WTC11 (cell line): ENCODE measurements at regions of chr9 and their contacts with region 1.

Region 1: GRCh38 chr9:15529566-15530324 is 19.0 kb upstream of the PSIP1 start:
- DNase-seq: no peak
- ATAC-seq: no peak
- H3K4me3 Mint-ChIP-seq: no peak overlapping the region
- H3K27ac Mint-ChIP-seq: no peak overlapping the region
- H3K4me1 Mint-ChIP-seq: no peaks in the 10 kb centered on the region
- H3K27me3 Mint-ChIP-seq: no peaks in the 10 kb centered on the region
- CTCF ChIP-seq: no peak

Region 2: DNA sequence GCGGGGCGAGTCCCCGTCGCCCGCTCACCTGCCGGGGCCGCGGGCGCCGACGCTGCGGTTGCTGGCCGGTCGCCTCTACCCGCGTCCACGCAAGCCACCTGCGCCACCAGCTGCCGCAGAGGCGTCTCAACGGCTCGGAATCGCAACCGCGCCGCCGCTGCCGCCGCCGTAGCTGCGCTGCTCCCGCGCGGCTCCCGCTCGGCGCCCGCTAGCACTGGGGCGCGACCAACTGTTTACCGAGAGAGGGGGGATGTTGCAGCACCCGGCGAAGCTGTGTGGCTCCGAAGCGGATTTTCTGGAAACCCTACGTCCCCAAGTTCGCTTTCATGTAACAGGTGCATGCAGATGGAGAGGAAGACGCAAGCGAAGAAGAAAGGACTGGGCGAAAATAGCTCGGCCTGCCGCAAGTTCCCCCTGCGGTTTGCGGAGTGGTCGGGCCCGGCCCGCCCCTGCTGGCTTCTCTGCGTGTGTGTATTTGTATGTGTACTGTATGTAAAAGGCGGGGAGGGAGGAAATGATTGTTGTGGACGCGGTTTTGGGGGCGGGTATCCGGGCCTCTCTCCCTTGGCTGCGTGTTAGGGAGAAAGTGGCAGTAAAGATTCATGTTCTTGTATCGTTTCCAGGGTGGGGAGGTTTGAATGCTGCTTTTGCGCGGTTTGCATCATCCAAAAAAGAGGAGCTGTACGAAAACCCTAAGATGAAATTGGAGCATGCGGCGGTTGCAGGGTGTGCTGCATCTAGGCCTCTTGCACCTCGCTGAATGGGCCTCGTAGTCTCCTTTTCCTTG is 18.8 kb before region 1 on chr9 and contains the start of gene PSIP1:
- CTCF ChIA-PET with region 1: interaction called, 23 read pairs
- POLR2A ChIA-PET with region 1: interaction called, 10 read pairs
- DNase-seq: peak; percentile 78
- ATAC-seq: peak; percentile 50
- H3K4me3 Mint-ChIP-seq: peak within 1 kb of the TSS; percentile 93
- H3K27ac Mint-ChIP-seq: peak within 1 kb of the TSS; percentile 100
- H3K4me1 Mint-ChIP-seq: peaks cover 60% of the 10 kb centered on the region
- H3K27me3 Mint-ChIP-seq: no peaks in the 10 kb centered on the region
- CTCF ChIP-seq: no peak
- total RNA-seq, gene PSIP1: 302 to 321 TPM (median 311 TPM) in 3 replicates